Dendritic cell treated with granulocyte-macrophage colony-stimulating factor and Interleukin-4, amounts not matched to agents 40 ng/mL and 50 ng/mL, for 4 days (primary cell): ENCODE measurements at regions of chr6 and their contacts with region 1.

Region 1: GRCh38 chr6:30730601-30731435 is 10.7 kb downstream of the TUBB start:
- H3K4me3 Mint-ChIP-seq: peak overlapping the region; percentile 67
- H3K27ac Mint-ChIP-seq: peak overlapping the region; percentile 51
- H3K4me1 Mint-ChIP-seq: peaks cover 31% of the 10 kb centered on the region
- H3K27me3 Mint-ChIP-seq: no peaks in the 10 kb centered on the region

Region 2: GRCh38 chr6:30678964-30679726 is 51.7 kb before region 1 on chr6:
- intact Hi-C with region 1: loop called (anchors 2 kb)
- H3K4me3 Mint-ChIP-seq: peak overlapping the region; percentile 93
- H3K27ac Mint-ChIP-seq: peak overlapping the region; percentile 91
- H3K4me1 Mint-ChIP-seq: peaks cover 56% of the 10 kb centered on the region
- H3K27me3 Mint-ChIP-seq: no peaks in the 10 kb centered on the region

Region 3: GRCh38 chr6:30877419-30878371 is 146.9 kb after region 1 on chr6:
- intact Hi-C with region 1: loop called (anchors 5 kb)
- H3K4me3 Mint-ChIP-seq: peak overlapping the region; percentile 65
- H3K27ac Mint-ChIP-seq: peak overlapping the region; percentile 21
- H3K4me1 Mint-ChIP-seq: peaks cover 8% of the 10 kb centered on the region
- H3K27me3 Mint-ChIP-seq: peaks cover 23% of the 10 kb centered on the region

Region 4: GRCh38 chr6:31037682-31038081 is 306.9 kb after region 1 on chr6:
- intact Hi-C with region 1: no loop called
- H3K4me3 Mint-ChIP-seq: no peak overlapping the region
- H3K27ac Mint-ChIP-seq: no peak overlapping the region
- H3K4me1 Mint-ChIP-seq: peaks cover 7% of the 10 kb centered on the region
- H3K27me3 Mint-ChIP-seq: peaks cover 54% of the 10 kb centered on the region

Region 5: GRCh38 chr6:31087494-31088089 is 356.8 kb after region 1 on chr6:
- intact Hi-C with region 1: loop called (anchors 10 kb)
- H3K4me3 Mint-ChIP-seq: no peak overlapping the region
- H3K27ac Mint-ChIP-seq: no peak overlapping the region
- H3K4me1 Mint-ChIP-seq: peaks cover 5% of the 10 kb centered on the region
- H3K27me3 Mint-ChIP-seq: peaks cover 13% of the 10 kb centered on the region